HepG2 (cell line): ENCODE measurements at regions of chr5 and their contacts with region 1.

Region 1: GRCh38 chr5:155136216-155136850 is 122.8 kb downstream of the KIF4B start:
- DNase-seq: no peak
- ATAC-seq: no peak
- H3K4me3 ChIP-seq: no peak overlapping the region
- H3K27ac ChIP-seq: no peak overlapping the region
- H3K4me1 ChIP-seq: no peaks in the 10 kb centered on the region
- H3K27me3 ChIP-seq: no peaks in the 10 kb centered on the region
- CTCF ChIP-seq: no peak
- EP300 ChIP-seq: no peak
- POLR2A ChIP-seq: no peak
- RAD21 ChIP-seq: no peak

Region 2: DNA sequence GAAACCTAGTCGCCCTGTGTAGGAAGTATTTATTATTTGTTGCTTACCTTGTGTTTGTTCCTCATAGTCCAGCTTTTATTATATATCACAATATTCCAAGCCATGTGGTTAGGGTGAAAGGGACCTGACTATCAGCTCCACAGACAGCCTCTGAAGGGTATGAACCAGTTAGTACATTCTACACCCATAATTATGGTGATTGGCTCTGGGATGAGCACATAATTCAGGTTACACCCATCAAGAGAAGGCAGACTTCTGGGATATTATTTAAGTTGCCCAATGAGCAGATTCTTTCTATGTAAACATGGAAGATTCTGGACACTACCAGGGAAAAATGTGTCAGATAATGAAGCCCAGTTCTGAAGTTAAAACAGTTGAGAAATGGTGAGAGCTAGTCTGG is 45.2 kb after region 1 on chr5:
- CTCF ChIA-PET with region 1: no interaction called
- POLR2A ChIA-PET with region 1: no interaction called
- in situ Hi-C with region 1: no loop called
- intact Hi-C with region 1: loop called (anchors 1 kb)
- DNase-seq: no peak
- ATAC-seq: no peak
- H3K4me3 ChIP-seq: no peak overlapping the region
- H3K27ac ChIP-seq: no peak overlapping the region
- H3K4me1 ChIP-seq: no peaks in the 10 kb centered on the region
- H3K27me3 ChIP-seq: no peaks in the 10 kb centered on the region
- CTCF ChIP-seq: no peak
- EP300 ChIP-seq: no peak
- POLR2A ChIP-seq: no peak
- RAD21 ChIP-seq: no peak